ENCODE measurements at regions of chr18 and their contacts with region 1.

Region 1: DNA sequence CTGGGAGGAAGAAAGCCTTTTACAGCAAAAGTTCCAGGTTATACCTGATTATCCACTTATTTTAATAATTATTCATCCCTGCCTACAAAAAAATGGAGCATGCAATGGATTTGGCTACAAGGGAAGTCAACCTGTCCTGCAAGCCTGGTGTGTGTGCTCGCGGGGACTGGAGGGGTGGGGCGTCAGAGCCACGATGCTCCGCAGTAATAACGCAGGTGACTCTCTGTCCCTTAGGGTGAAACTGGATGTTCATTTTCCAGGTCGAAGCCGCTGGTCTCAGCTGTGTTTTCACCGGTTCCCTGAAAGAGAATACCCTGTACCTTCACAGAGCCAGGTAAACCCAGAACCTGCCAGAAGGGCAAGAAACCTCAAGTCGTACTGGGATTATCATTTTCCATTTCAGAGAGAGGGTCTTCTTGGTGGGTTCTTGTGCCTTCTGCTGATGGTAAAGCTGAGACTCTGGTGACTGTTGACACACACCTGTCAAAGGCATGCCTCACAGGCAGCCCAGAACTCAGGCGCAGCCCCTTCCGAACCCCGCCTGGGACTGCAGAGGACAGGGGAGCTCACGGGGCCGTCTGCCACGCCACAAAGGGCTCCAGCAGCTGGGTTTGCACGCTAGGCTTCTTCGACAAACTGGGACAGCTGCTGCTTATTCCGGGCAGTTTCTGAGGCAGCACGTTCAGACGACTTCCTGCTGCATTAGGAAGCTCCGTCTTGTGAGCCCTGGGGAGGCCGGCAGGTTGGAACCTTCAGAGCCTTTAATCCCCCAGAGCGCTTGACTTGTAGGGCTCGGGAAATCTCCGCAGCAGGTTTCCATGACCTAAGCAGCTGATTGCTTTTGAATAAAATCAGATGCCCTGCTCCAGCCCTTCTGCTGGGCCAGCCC is 58.6 kb downstream of the KCNG2 start:
- DNase-seq: no peak
- ATAC-seq: peak; percentile 57
- H3K4me3 Mint-ChIP-seq: peak overlapping the region; percentile 26
- H3K27ac Mint-ChIP-seq: no peak overlapping the region
- H3K4me1 Mint-ChIP-seq: peaks cover 30% of the 10 kb centered on the region
- H3K27me3 Mint-ChIP-seq: no peaks in the 10 kb centered on the region
- CTCF ChIP-seq: no peak

Region 2: GRCh38 chr18:79819968-79820351 is 36.4 kb before region 1 on chr18:
- CTCF ChIA-PET with region 1: no interaction called
- POLR2A ChIA-PET with region 1: no interaction called
- intact Hi-C with region 1: loop called (anchors 1 kb)
- DNase-seq: peak; percentile 42
- ATAC-seq: peak; percentile 94
- H3K4me3 Mint-ChIP-seq: peak overlapping the region; percentile 73
- H3K27ac Mint-ChIP-seq: peak overlapping the region; percentile 84
- H3K4me1 Mint-ChIP-seq: peaks cover 36% of the 10 kb centered on the region
- H3K27me3 Mint-ChIP-seq: peaks cover 3% of the 10 kb centered on the region
- CTCF ChIP-seq: no peak

Region 3: GRCh38 chr18:79884963-79885751 is 28.8 kb after region 1 on chr18:
- CTCF ChIA-PET with region 1: no interaction called
- POLR2A ChIA-PET with region 1: no interaction called
- intact Hi-C with region 1: no loop called
- DNase-seq: no peak
- ATAC-seq: no peak
- H3K4me3 Mint-ChIP-seq: no peak overlapping the region
- H3K27ac Mint-ChIP-seq: no peak overlapping the region
- H3K4me1 Mint-ChIP-seq: no peaks in the 10 kb centered on the region
- H3K27me3 Mint-ChIP-seq: no peaks in the 10 kb centered on the region
- CTCF ChIP-seq: no peak

Region 4: DNA sequence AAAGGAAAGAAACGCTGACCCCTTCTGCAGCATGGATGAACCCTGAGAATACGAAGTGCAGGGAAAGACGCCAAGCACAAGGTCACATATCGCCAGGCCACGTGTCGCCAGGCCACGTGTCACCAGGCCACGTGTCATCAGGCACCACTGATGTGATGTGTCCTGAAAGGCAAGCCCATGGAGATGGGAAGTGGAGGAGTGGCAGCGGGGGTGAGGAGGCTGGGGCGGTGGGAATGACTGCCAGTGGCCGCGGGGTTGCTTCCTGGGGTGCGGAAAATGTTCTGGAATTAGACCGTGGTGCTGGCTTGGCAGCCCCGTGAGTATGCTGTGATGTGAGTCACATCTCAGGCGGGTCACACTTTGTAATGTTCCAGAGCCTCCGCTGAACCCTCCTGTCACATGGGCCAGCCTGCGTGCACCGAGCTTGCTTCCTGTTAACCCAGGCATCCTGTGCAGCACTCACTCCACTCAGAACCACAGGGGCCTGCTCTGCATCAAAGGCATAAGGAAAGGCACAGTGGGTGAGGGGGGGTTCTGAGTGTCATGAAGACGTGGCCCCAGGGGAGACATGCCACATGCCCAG is 56.1 kb after region 1 on chr18:
- CTCF ChIA-PET with region 1: no interaction called
- POLR2A ChIA-PET with region 1: no interaction called
- intact Hi-C with region 1: loop called (anchors 10 kb)
- DNase-seq: peak; percentile 12
- ATAC-seq: peak; percentile 60
- H3K4me3 Mint-ChIP-seq: no peak overlapping the region
- H3K27ac Mint-ChIP-seq: no peak overlapping the region
- H3K4me1 Mint-ChIP-seq: peaks cover 31% of the 10 kb centered on the region
- H3K27me3 Mint-ChIP-seq: no peaks in the 10 kb centered on the region
- CTCF ChIP-seq: no peak

Region 5: DNA sequence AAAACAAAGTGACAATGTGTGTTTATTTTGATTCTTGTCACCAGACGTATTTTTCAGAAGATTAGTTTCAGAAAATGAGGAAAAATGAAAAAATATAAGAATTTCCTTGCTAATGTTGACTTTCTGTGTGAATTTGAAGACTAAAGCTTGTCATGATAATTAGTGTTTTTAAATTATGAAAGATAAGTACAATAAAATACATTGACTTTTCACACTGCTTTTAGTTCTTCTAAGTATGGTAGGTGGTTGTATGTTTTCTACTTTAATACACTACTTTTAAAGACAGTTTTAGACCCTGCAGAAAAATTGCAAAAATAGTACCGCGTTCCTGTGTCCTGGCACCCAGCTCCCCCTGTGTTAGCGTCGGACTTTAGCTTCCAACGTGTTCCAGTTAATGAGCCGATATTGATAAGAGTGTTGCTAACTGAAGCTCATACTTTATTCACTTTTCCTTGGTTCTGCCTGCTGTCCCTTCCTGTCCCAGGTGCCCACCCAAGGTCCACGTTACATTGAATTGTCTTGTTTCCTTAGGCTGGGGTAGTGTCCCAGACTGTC is 178.6 kb after region 1 on chr18:
- CTCF ChIA-PET with region 1: no interaction called
- POLR2A ChIA-PET with region 1: no interaction called
- intact Hi-C with region 1: no loop called
- DNase-seq: no peak
- ATAC-seq: no peak
- H3K4me3 Mint-ChIP-seq: peak overlapping the region; percentile 90
- H3K27ac Mint-ChIP-seq: peak overlapping the region; percentile 93
- H3K4me1 Mint-ChIP-seq: peaks cover 24% of the 10 kb centered on the region
- H3K27me3 Mint-ChIP-seq: no peaks in the 10 kb centered on the region
- CTCF ChIP-seq: no peak

Measured in activated B cell treated with CpG ODN at 0.5 μM for 24 hours (primary cell).